ENCODE measurements at regions of chr6 and their contacts with region 1.

Region 1: DNA sequence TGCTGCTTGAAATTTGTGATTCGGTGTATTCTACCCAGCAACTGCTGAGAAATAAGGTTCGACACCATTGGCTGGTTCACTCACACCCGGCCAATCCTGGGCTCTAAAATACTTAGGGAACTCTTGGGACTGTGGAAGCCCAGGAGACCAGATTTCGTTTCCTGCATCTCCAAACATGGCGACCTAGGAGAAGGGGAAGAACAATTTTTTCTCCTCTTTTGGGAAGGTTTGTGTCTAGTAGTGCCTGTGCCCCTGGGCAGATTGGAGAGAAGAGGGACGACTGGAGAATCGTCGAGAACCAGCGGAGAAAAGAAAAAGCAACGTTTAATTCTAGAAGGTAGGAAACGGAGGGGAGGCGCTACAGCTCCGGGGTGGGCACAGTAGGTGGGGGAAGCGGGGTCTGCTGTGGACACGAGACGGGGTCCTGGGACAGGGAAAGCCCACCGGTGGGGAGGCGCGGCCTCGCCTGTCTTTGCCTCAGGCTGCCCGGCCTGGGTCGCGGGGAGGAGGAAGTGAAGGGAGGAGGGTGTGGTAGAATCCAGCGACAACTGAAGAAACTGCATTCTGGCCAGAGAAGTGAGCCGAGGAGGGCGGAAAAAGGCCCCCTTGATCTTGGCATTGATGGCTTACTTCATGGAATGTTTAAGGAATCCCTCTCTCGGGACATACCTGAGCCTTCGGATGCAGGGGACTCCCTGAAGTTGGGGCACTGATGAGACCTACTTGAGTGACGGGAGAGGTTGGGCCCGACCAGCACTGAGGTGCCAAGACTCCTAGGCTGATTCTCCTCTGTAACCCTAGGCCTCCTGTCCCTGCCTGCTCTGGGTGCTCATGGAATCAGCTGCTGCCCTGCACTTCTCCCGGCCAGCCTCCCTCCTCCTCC is at the start of gene BTN2A1:
- DNase-seq: peak; percentile 68
- H3K4me3 Mint-ChIP-seq: peak within 1 kb of the TSS; percentile 100
- H3K27ac Mint-ChIP-seq: peak within 1 kb of the TSS; percentile 96
- H3K4me1 Mint-ChIP-seq: peaks cover 57% of the 10 kb centered on the region
- H3K27me3 Mint-ChIP-seq: no peaks in the 10 kb centered on the region
- total RNA-seq, gene BTN2A1: 19.9 TPM in 2 replicates

Region 2: GRCh38 chr6:25682324-25682723 is 775.7 kb before region 1 on chr6:
- intact Hi-C with region 1: no loop called
- DNase-seq: no peak
- H3K4me3 Mint-ChIP-seq: no peak overlapping the region
- H3K27ac Mint-ChIP-seq: no peak overlapping the region
- H3K4me1 Mint-ChIP-seq: no peaks in the 10 kb centered on the region
- H3K27me3 Mint-ChIP-seq: peaks cover 8% of the 10 kb centered on the region

Region 3: DNA sequence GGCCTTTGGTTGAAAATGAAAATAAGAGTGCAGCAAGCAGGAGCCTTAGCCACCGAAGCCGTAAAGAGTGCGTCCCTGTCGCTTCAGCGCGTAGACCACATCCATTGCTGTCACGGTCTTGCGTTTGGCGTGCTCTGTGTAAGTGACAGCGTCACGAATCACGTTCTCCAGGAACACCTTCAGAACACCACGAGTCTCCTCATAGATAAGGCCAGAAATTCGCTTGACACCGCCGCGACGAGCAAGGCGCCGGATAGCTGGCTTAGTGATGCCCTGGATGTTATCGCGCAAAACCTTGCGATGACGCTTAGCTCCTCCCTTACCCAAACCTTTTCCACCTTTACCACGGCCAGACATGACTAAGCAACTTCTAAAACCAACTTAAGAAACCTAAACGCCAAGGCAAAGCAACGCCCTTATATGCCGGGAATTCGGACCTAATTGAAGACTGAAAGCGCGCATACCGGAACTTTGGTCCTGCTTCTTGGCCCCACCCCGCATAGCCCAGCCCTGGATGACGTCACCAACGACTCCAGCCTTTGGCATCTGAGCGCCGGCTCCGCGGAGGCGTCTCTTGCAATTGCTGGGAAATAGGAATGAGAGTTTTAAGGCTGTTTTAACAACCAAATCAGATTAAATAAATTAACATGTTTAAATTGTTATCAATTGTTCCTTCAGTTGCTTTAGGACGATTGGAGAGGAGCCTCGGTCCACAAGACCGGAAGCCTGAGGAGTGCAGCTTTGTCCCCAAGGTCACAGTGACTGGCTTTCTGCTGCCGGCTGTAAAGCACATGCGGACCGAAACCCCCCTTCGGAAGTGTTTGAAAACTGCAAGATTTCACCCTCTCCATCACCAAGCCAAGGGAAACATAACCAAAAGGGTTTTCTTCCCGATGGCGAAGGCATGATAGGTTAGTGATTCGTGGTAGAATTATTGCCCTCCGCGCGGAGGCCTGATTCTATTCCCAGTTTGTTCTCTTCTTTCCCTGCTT is 172.6 kb before region 1 on chr6:
- intact Hi-C with region 1: no loop called
- DNase-seq: peak; percentile 95
- H3K4me3 Mint-ChIP-seq: peak overlapping the region; percentile 93
- H3K27ac Mint-ChIP-seq: peak overlapping the region; percentile 93
- H3K4me1 Mint-ChIP-seq: peaks cover 44% of the 10 kb centered on the region
- H3K27me3 Mint-ChIP-seq: peaks cover 4% of the 10 kb centered on the region

Region 4: GRCh38 chr6:26401987-26402658 is 55.9 kb before region 1 on chr6 and contains the start of gene BTN3A1:
- intact Hi-C with region 1: loop called (anchors 5 kb)
- DNase-seq: peak; percentile 61
- H3K4me3 Mint-ChIP-seq: peak within 1 kb of the TSS; percentile 94
- H3K27ac Mint-ChIP-seq: peak within 1 kb of the TSS; percentile 97
- H3K4me1 Mint-ChIP-seq: peaks cover 56% of the 10 kb centered on the region
- H3K27me3 Mint-ChIP-seq: no peaks in the 10 kb centered on the region
- total RNA-seq, gene BTN3A1: 28.2 and 30.6 TPM in 2 replicates

Region 5: DNA sequence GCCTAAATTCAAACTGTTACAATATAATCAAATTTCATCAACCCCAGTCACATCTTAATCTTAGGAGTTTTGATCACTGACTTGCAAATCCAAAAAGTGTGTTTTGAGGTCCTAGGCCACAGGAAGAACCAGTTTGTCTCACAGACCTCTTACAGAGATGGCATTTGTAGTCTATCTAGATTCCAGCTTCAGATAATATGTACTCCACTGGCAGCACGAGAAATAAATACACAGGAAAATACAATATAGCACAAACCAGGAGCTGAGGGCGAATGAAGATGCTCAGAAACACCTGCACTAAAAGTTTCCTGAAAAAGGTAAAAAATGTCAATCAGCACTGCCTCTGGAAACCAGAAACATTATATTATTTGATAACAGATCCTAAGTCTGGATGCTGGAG is 18.4 kb before region 1 on chr6:
- intact Hi-C with region 1: loop called (anchors 1 kb)
- DNase-seq: no peak
- H3K4me3 Mint-ChIP-seq: peak overlapping the region; percentile 87
- H3K27ac Mint-ChIP-seq: peak overlapping the region; percentile 92
- H3K4me1 Mint-ChIP-seq: peaks cover 40% of the 10 kb centered on the region
- H3K27me3 Mint-ChIP-seq: no peaks in the 10 kb centered on the region

Region 6: GRCh38 chr6:26520853-26521599 is 63.0 kb after region 1 on chr6:
- intact Hi-C with region 1: loop called (anchors 1 kb)
- DNase-seq: peak; percentile 78
- H3K4me3 Mint-ChIP-seq: peak overlapping the region; percentile 83
- H3K27ac Mint-ChIP-seq: peak overlapping the region; percentile 97
- H3K4me1 Mint-ChIP-seq: peaks cover 35% of the 10 kb centered on the region
- H3K27me3 Mint-ChIP-seq: peaks cover 3% of the 10 kb centered on the region

Measured in activated T-helper 1 cell treated with anti-CD3 and anti-CD28 coated beads, Interleukin-12 subunit alpha, Interleukin-12 subunit beta, Interleukin-2, Interleukin-4 antibody, amounts not matched to agents 30 ng/mL and 10 ng/mL and 1 ng/mL, durations not matched to agents 14 hours and 24 hours and 36 hours (primary cell).